A673 (cell line): ENCODE measurements at regions of chr6 and their contacts with region 1.

Region 1: GRCh38 chr6:112839525-112839961 is 492.4 kb downstream of the RFPL4B start:
- DNase-seq: peak; percentile 94
- H3K4me3 ChIP-seq: no peak overlapping the region
- H3K27ac ChIP-seq: peak overlapping the region; percentile 53
- H3K4me1 ChIP-seq: peaks cover 27% of the 10 kb centered on the region
- H3K27me3 ChIP-seq: no peaks in the 10 kb centered on the region
- CTCF ChIP-seq: no peak

Region 2: DNA sequence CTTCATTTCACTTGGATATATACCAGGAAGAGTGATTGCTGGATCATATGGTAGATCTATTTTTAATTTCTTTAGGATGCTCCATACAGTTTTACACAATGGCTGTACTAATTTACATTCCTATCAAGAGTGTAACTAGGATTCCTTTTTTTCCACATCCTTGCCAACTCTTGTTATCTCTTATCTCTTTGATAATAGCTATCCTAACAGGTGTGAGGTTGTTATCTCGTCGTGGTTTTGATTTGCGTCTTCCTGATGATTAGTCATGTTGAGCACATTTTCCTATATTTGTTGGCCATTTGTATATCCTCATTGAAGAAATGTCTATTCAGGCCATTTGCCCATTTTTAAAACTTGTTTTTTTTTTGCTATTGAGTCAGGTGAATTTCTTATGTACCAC is 60.0 kb after region 1 on chr6:
- CTCF ChIA-PET with region 1: no interaction called
- POLR2A ChIA-PET with region 1: no interaction called
- intact Hi-C with region 1: no loop called
- DNase-seq: no peak
- H3K4me3 ChIP-seq: no peak overlapping the region
- H3K27ac ChIP-seq: no peak overlapping the region
- H3K4me1 ChIP-seq: no peaks in the 10 kb centered on the region
- H3K27me3 ChIP-seq: no peaks in the 10 kb centered on the region
- CTCF ChIP-seq: no peak

Region 3: GRCh38 chr6:112912416-112913101 is 73.0 kb after region 1 on chr6:
- CTCF ChIA-PET with region 1: no interaction called
- POLR2A ChIA-PET with region 1: no interaction called
- intact Hi-C with region 1: loop called (anchors 2 kb)
- DNase-seq: peak; percentile 85
- H3K4me3 ChIP-seq: no peak overlapping the region
- H3K27ac ChIP-seq: peak overlapping the region; percentile 25
- H3K4me1 ChIP-seq: peaks cover 24% of the 10 kb centered on the region
- H3K27me3 ChIP-seq: no peaks in the 10 kb centered on the region
- CTCF ChIP-seq: no peak